ENCODE measurements at regions of chr3 and their contacts with region 1.

Region 1: GRCh38 chr3:123723522-123724168 is 138.8 kb upstream of the HACD2 start:
- DNase-seq: peak; percentile 67
- H3K4me3 ChIP-seq: no peak overlapping the region; a peak in 1 of 4 replicates
- H3K27ac ChIP-seq: peak overlapping the region; percentile 44 to 64; a peak in 3 of 4 replicates
- H3K4me1 ChIP-seq: peaks cover 23 to 41% of the 10 kb centered on the region in 2 experiments; a peak in 3 of 4 replicates
- H3K27me3 ChIP-seq: no peaks in the 10 kb centered on the region
- CTCF ChIP-seq: peak; percentile 87
- EP300 ChIP-seq: no peak
- RAD21 ChIP-seq: peak; percentile 69

Region 2: DNA sequence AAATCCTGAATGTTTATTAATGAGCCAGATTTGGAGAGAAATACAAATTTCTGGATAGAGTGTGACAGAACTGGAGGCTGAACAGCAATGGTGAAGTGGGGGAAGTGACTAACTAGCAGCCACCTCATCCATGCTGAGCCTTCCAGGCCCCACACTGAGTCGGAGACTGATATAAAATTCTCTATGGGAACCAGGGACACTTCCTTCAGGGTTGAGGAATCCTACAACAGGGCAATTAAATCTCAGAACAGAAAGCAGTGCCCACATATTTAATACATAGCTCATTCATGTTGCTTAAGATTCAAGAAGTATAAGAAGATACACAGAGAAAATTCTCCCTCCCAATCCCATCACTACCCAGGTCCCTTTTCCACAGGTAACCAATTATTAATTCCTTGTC is 188.1 kb before region 1 on chr3:
- CTCF ChIA-PET with region 1: no interaction called
- POLR2A ChIA-PET with region 1: no interaction called
- DNase-seq: no peak
- H3K4me3 ChIP-seq: no peak overlapping the region
- H3K27ac ChIP-seq: peak overlapping the region in 1 of 2 experiments; percentile 54; a peak in 2 of 4 replicates
- H3K4me1 ChIP-seq: peaks cover 0 to 6% of the 10 kb centered on the region in 2 experiments; a peak in 1 of 4 replicates
- H3K27me3 ChIP-seq: no peaks in the 10 kb centered on the region
- CTCF ChIP-seq: no peak
- EP300 ChIP-seq: no peak
- RAD21 ChIP-seq: no peak

Region 3: GRCh38 chr3:123642182-123642956 is 81.3 kb before region 1 on chr3:
- CTCF ChIA-PET with region 1: interaction called, 26 read pairs
- POLR2A ChIA-PET with region 1: no interaction called
- DNase-seq: peak; percentile 65
- H3K4me3 ChIP-seq: no peak overlapping the region; a peak in 1 of 4 replicates
- H3K27ac ChIP-seq: peak overlapping the region in 1 of 2 experiments; percentile 19; a peak in 2 of 4 replicates
- H3K4me1 ChIP-seq: peaks cover 0 to 7% of the 10 kb centered on the region in 2 experiments; a peak in 1 of 4 replicates
- H3K27me3 ChIP-seq: no peaks in the 10 kb centered on the region
- CTCF ChIP-seq: peak; percentile 97
- EP300 ChIP-seq: no peak
- RAD21 ChIP-seq: peak; percentile 65

Region 4: DNA sequence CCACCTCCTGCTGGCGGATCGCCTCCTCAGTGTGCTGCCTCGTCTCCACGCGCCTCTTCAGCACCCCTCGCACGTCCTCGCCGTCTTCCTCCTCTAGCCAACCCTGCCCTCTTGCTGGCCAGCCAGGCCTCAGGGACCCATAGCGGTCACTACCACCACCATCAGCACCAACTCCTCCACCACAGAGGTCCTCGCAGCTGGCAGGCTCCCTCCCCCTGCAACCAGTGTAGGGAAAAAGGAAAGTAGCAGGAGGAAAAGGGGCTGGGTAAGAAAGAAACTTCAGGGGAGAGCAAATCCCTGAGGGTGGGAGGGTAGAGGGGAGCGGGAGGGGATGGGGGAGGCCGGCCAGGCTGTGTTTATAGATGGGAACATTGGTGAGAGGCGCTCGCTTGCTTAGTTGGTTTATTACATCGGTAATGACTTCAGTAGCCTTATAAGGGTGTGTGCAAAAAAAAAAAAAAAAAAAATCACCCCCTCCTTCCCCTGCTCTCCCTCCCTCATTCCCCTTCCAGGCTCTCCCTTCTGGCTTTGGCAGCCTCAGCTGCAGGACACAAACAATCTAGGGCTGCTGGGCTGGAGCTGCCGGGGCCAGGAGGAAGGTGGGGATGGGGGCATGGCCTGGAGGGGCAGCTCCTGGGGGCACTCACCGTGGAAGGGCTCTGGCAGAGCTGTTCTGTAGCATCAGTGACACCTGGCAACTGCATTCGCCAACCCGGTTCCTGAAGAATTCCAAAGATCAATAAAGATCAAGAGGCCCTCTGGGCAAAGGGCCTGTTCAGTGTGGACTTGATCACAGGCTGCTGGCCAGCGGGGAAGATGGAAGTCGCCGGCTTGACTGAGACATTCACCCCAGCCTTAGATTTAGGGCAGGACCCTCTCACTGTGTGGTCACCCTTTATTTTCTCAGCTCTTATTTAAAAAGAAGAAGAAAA is 22.6 kb before region 1 on chr3:
- CTCF ChIA-PET with region 1: interaction called, 38 read pairs
- POLR2A ChIA-PET with region 1: no interaction called
- DNase-seq: no peak
- H3K4me3 ChIP-seq: no peak overlapping the region
- H3K27ac ChIP-seq: no peak overlapping the region
- H3K4me1 ChIP-seq: peaks cover 8 to 19% of the 10 kb centered on the region in 2 experiments; a peak in 2 of 4 replicates
- H3K27me3 ChIP-seq: no peaks in the 10 kb centered on the region
- CTCF ChIP-seq: no peak
- EP300 ChIP-seq: no peak
- RAD21 ChIP-seq: no peak

Region 5: GRCh38 chr3:123745184-123745855 is 21.7 kb after region 1 on chr3:
- CTCF ChIA-PET with region 1: interaction called, 16 read pairs
- POLR2A ChIA-PET with region 1: no interaction called
- DNase-seq: no peak
- H3K4me3 ChIP-seq: no peak overlapping the region
- H3K27ac ChIP-seq: peak overlapping the region; percentile 28 to 82; a peak in 2 of 4 replicates
- H3K4me1 ChIP-seq: peaks cover 2 to 39% of the 10 kb centered on the region in 2 experiments; a peak in 3 of 4 replicates
- H3K27me3 ChIP-seq: no peaks in the 10 kb centered on the region
- CTCF ChIP-seq: peak; percentile 44
- EP300 ChIP-seq: no peak
- RAD21 ChIP-seq: peak; percentile 42

Region 6: DNA sequence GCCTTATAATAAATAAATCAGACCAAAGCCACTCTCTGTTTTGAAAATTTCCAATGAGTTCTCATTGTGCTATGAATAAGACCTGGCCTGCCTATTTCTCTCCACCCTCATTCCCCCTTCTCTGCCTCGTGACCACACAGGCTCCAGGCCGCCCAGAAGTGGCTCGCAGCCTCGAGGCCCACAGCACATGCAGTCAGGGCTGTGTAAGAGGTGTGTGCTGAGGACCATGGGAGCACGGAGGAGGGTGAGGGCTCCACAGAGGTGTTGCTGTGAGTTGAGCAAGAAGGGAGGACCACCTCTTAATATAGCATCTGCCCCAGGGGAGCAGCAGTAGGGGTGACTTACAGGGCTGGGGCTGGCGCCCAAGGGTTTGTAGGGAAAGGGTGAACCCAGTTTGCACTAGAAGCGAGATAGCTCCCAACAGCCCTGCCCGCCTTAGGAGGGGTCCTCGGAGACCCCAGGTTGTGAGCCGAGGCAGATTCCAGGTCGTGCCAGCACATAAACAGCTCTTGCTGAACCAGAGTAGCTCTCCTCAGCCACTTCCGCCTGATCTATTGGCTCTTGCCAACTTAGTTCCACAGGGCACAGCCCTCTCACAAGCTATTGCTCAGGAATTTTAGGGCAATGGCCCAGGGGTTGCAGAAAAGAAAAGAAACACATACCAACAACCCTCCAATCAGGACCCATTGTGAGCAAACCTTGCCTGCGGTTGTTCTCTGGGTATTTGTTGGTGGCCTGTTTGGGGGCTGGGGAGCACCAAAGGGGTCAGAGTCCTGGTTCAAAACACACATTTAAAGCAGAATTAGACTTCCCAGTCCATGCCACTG is 42.8 kb after region 1 on chr3:
- CTCF ChIA-PET with region 1: interaction called, 10 read pairs
- POLR2A ChIA-PET with region 1: no interaction called
- DNase-seq: no peak
- H3K4me3 ChIP-seq: no peak overlapping the region
- H3K27ac ChIP-seq: peak overlapping the region; percentile 21 to 24; a peak in 2 of 4 replicates
- H3K4me1 ChIP-seq: peaks cover 9 to 20% of the 10 kb centered on the region in 2 experiments; a peak in 3 of 4 replicates
- H3K27me3 ChIP-seq: no peaks in the 10 kb centered on the region
- CTCF ChIP-seq: no peak
- EP300 ChIP-seq: no peak
- RAD21 ChIP-seq: no peak

Region 7: DNA sequence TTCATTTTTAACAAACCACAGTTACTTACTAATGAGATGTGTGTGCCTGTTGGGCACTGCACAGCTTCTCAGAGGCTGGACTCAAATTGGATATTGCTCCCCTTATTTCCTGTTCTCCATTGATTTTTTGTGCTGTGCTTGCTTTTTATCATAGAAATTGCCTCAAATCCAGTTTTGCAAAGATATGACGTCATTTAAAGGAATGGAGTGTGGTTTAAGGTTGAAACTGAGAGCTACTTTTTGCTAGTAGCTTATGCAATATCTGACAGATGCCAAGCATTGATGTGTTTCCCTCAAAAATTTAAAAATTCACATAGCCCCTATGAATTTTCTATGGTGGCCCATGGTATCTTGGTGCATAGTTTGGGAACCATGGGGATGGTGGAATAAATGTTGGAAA is 335.9 kb after region 1 on chr3:
- CTCF ChIA-PET with region 1: no interaction called
- POLR2A ChIA-PET with region 1: no interaction called
- DNase-seq: no peak
- H3K4me3 ChIP-seq: no peak overlapping the region
- H3K27ac ChIP-seq: peak overlapping the region in 1 of 2 experiments; percentile 16; a peak in 1 of 4 replicates
- H3K4me1 ChIP-seq: peaks cover 0 to 73% of the 10 kb centered on the region in 2 experiments; a peak in 2 of 4 replicates
- H3K27me3 ChIP-seq: no peaks in the 10 kb centered on the region
- CTCF ChIP-seq: no peak
- EP300 ChIP-seq: no peak
- RAD21 ChIP-seq: no peak

Measured in SK-N-SH (cell line).